ENCODE measurements at regions of chrX and their contacts with region 1.

Region 1: DNA sequence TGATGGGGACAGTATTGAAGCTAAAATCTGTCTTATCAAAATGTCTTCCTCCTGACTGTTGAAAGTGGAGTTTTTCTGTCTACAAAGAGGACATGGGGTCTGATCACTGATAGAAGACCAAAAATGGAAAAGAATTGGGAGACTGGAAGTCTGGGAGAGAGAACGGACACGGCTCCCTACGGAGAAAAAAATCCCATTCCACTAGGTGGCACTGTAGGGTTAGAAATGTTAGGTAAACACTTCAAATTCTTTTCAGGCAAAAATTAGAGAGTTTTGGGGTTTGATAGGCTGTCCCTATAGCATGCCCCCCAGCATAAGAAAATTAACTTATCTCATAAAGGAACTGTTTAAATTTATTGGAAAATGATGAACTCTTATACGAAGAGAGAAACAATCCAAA is 200.5 kb downstream of the FAM133A start:
- DNase-seq: peak in 5 of 7 donors; percentile 21 to 57 (median 31)
- H3K4me3 ChIP-seq: no peak overlapping the region
- H3K27ac ChIP-seq: no peak overlapping the region
- H3K4me1 ChIP-seq: peaks cover 0 to 4% of the 10 kb centered on the region in 2 donors
- H3K27me3 ChIP-seq: peaks cover 8% of the 10 kb centered on the region
- CTCF ChIP-seq: peak; percentile 33 to 62 (median 50)
- POLR2A ChIP-seq: no peak

Region 2: GRCh38 chrX:94058728-94059382 is 184.3 kb after region 1 on chrX:
- intact Hi-C with region 1: loop called in 1 of 2 experiments (anchors 5 kb)
- DNase-seq: peak; percentile 16 to 51 (median 27)
- H3K4me3 ChIP-seq: no peak overlapping the region
- H3K27ac ChIP-seq: no peak overlapping the region
- H3K4me1 ChIP-seq: no peaks in the 10 kb centered on the region
- H3K27me3 ChIP-seq: peaks cover 34% of the 10 kb centered on the region
- CTCF ChIP-seq: peak; percentile 32 to 62 (median 44)
- POLR2A ChIP-seq: no peak